Right ventricle myocardium inferior (tissue), 1 donor: ENCODE measurements at regions of chr7 and their contacts with region 1.

Region 1: DNA sequence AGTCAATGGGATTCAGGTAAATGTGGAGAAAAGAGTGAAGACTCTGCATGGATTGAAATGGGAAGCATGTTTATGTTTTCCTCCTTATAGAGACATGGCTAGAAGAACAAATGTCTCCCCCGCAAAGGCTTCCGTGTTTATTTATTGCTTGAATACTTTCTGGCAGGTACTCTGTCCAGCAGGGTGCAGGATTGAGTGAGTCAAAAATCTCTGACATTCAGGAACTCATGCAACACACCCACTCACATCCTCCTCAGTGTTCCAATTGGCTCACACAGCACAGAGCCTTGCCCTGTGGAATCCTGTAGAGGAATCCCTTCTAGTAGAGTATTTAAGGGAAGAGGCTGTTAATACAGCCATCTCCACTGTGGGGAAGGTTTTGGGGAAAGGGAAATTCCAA is 290.3 kb upstream of the VWC2 start:
- DNase-seq: no peak
- ATAC-seq: peak; percentile 84

Region 2: DNA sequence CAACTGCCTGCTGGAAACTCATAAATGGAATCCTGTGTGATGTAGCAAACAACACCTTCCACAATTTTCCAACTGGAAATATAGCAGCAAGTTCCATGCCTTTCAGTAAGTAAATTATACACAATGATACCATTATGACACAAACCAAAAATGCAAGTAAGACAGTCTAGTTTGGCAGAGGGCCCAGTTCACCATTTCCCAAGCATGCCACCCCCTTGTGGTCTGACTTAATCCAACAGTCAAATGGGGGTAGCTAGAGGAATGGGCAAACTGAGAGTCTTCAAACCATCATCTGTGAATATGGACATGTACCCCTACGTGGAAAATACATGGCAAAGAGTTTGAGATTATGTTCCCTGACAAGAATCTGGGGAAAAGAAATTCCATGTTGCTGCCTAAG is 152.7 kb after region 1 on chr7:
- intact Hi-C with region 1: loop called (anchors 10 kb)
- DNase-seq: no peak
- ATAC-seq: no peak

Region 3: GRCh38 chr7:49776994-49777393 is 293.9 kb after region 1 on chr7:
- intact Hi-C with region 1: loop called (anchors 5 kb)
- DNase-seq: no peak
- ATAC-seq: no peak

Region 4: GRCh38 chr7:49791088-49791741 is 308.1 kb after region 1 on chr7:
- intact Hi-C with region 1: loop called (anchors 5 kb)
- DNase-seq: no peak
- ATAC-seq: peak; percentile 75

Region 5: GRCh38 chr7:49852619-49853462 is 369.7 kb after region 1 on chr7:
- intact Hi-C with region 1: loop called (anchors 2 kb)
- DNase-seq: no peak
- ATAC-seq: peak; percentile 69